Left cardiac atrium (tissue), 4 donors: ENCODE measurements at regions of chr7 and their contacts with region 1.

Region 1: GRCh38 chr7:13742811-13743210 is 246.7 kb downstream of the ETV1 start:
- DNase-seq: peak; percentile 22
- ATAC-seq: peak; percentile 74 to 80

Region 2: DNA sequence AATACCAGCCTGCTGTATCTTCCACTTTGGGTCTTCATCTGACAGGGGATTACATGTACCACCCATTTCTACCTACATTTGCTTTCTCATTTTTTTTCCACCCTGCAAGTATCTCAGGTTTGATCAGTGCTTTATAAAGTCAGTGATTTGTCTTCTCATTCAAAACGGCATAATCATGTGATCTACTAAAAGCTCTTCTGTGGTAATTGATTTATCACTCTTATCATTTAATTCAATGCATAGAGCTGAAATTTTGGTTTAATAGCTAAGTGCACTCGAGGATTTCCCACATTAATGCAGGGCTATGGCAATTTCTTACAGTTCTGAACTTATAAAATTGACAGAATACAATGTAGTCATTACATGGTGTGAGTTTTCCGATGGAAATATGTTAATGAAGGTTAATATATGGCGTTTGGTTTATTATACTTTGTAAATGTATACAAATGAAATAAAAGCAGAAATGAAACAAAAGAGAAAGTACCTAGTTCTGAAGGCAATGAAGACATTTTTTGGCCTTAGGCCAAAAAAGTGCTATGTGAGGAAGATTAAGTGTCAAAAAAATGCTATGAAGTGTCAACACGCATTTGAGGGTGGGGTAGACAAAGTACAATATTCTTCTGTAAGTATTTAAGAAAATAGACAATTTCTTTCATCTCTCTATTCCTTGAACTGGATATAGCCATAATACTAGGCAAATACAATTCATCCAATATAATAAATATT is 210.6 kb before region 1 on chr7:
- intact Hi-C with region 1: loop called in 1 of 2 experiments (anchors 5 kb)
- DNase-seq: no peak
- ATAC-seq: no peak

Region 3: GRCh38 chr7:13628239-13629001 is 114.4 kb before region 1 on chr7:
- intact Hi-C with region 1: no loop called
- DNase-seq: no peak
- ATAC-seq: no peak

Region 4: GRCh38 chr7:13692548-13692947 is 50.3 kb before region 1 on chr7:
- intact Hi-C with region 1: no loop called
- DNase-seq: no peak
- ATAC-seq: no peak

Region 5: GRCh38 chr7:13963925-13964324 is 221.1 kb after region 1 on chr7:
- intact Hi-C with region 1: no loop called
- DNase-seq: no peak
- ATAC-seq: no peak